CD8-positive, alpha-beta T cell (primary cell): ENCODE measurements at regions of chr6 and their contacts with region 1.

Region 1: GRCh38 chr6:84220809-84221409 is 6.5 kb downstream of the CEP162 start:
- DNase-seq: peak in 2 of 9 experiments; percentile 27 to 33
- ATAC-seq: no peak
- H3K4me3 ChIP-seq: no peak overlapping the region
- H3K4me3 Mint-ChIP-seq: no peak overlapping the region
- H3K27ac ChIP-seq: no peak overlapping the region
- H3K27ac Mint-ChIP-seq: no peak overlapping the region
- H3K4me1 ChIP-seq: no peaks in the 10 kb centered on the region
- H3K4me1 Mint-ChIP-seq: peaks cover 4% of the 10 kb centered on the region
- H3K27me3 ChIP-seq: no peaks in the 10 kb centered on the region
- H3K27me3 Mint-ChIP-seq: no peaks in the 10 kb centered on the region
- CTCF ChIP-seq: peak; percentile 60

Region 2: DNA sequence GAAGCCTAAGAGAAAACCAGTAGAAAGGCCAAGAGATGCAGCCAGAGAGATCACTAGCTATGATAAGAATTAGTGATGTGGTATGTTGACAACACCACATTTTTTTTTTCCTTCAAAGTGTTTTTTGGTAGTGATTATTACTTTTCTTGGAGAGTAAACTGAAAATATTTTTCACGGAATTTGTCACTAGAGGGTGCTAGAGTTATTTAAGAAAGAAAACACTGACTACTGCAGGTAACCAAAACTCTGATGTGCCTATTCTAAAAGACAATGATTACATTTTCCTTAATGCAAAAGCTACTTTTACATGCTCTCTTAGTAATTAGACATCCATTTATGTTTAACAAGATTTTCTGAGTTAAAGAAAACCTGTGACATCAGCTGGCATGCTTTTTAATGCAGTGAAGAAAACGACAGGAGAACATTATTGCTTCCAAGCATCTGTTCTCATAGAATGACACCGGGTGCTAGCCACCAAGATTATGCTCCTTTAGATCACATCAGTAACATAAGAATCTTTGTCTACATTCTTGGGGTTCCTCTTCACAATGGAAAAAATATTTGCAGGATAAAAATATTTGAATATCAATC is 998.9 kb before region 1 on chr6:
- CTCF ChIA-PET with region 1: no interaction called
- POLR2A ChIA-PET with region 1: no interaction called
- intact Hi-C with region 1: loop called (anchors 2 to 10 kb)
- DNase-seq: peak in 2 of 9 experiments; percentile 43 to 47
- ATAC-seq: no peak
- H3K4me3 ChIP-seq: no peak overlapping the region
- H3K4me3 Mint-ChIP-seq: no peak overlapping the region
- H3K27ac ChIP-seq: no peak overlapping the region
- H3K27ac Mint-ChIP-seq: no peak overlapping the region
- H3K4me1 ChIP-seq: no peaks in the 10 kb centered on the region
- H3K4me1 Mint-ChIP-seq: no peaks in the 10 kb centered on the region
- H3K27me3 ChIP-seq: no peaks in the 10 kb centered on the region
- H3K27me3 Mint-ChIP-seq: no peaks in the 10 kb centered on the region
- CTCF ChIP-seq: peak; percentile 62

Region 3: GRCh38 chr6:83615025-83615999 is 605.6 kb before region 1 on chr6:
- CTCF ChIA-PET with region 1: interaction called, 3 read pairs
- POLR2A ChIA-PET with region 1: no interaction called
- intact Hi-C with region 1: loop called in 1 of 2 experiments (anchors 5 kb)
- DNase-seq: peak in 2 of 9 experiments; percentile 8 to 24
- ATAC-seq: no peak
- H3K4me3 ChIP-seq: no peak overlapping the region
- H3K4me3 Mint-ChIP-seq: no peak overlapping the region
- H3K27ac ChIP-seq: no peak overlapping the region
- H3K27ac Mint-ChIP-seq: no peak overlapping the region
- H3K4me1 ChIP-seq: no peaks in the 10 kb centered on the region
- H3K4me1 Mint-ChIP-seq: no peaks in the 10 kb centered on the region
- H3K27me3 ChIP-seq: no peaks in the 10 kb centered on the region
- H3K27me3 Mint-ChIP-seq: no peaks in the 10 kb centered on the region
- CTCF ChIP-seq: peak; percentile 43

Region 4: DNA sequence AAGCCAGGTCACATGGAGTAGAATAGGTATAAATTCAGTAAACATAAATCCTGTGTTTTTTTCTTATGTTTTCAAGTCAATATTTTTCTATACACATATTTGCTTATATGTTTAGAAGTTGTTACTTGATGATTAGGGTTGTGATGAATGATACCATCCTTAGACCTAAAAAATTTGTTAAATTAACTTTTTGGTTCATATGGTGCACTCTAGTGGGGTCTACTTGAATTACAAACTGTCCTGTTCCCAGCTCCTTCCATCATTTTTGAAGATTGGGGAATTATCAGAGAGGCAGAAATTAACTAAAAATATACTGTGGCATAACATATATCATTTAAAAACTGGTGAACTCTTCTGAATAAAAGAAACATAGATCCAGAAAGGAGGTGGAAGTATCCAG is 416.0 kb before region 1 on chr6:
- CTCF ChIA-PET with region 1: no interaction called
- POLR2A ChIA-PET with region 1: no interaction called
- intact Hi-C with region 1: no loop called
- DNase-seq: no peak
- ATAC-seq: no peak
- H3K4me3 ChIP-seq: no peak overlapping the region
- H3K4me3 Mint-ChIP-seq: no peak overlapping the region
- H3K27ac ChIP-seq: no peak overlapping the region
- H3K27ac Mint-ChIP-seq: no peak overlapping the region
- H3K4me1 ChIP-seq: no peaks in the 10 kb centered on the region
- H3K4me1 Mint-ChIP-seq: no peaks in the 10 kb centered on the region
- H3K27me3 ChIP-seq: no peaks in the 10 kb centered on the region
- H3K27me3 Mint-ChIP-seq: peaks cover 4% of the 10 kb centered on the region
- CTCF ChIP-seq: no peak

Region 5: DNA sequence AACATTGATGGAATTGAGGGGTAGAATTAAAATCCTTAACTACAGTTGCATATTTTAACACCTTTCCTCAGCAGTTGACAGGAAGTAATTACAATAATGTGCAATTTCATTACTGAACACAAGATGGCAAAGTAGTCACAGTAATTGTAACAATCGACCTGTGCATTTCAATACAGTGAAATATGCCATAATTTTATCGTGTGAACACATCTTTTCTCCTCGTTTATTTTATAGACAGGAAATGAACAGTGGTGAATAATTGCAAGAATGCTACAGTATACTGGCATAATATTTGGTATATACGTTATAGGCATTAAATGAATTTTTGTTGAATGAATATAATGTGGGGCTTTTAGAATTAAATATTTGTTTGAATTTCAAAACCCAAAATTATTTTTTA is 336.4 kb before region 1 on chr6:
- CTCF ChIA-PET with region 1: interaction called, 4 read pairs
- POLR2A ChIA-PET with region 1: no interaction called
- intact Hi-C with region 1: loop called (anchors 1 to 2 kb)
- DNase-seq: peak in 2 of 9 experiments; percentile 50 to 66
- ATAC-seq: peak; percentile 79
- H3K4me3 ChIP-seq: no peak overlapping the region
- H3K4me3 Mint-ChIP-seq: no peak overlapping the region
- H3K27ac ChIP-seq: no peak overlapping the region
- H3K27ac Mint-ChIP-seq: no peak overlapping the region
- H3K4me1 ChIP-seq: no peaks in the 10 kb centered on the region
- H3K4me1 Mint-ChIP-seq: peaks cover 25% of the 10 kb centered on the region
- H3K27me3 ChIP-seq: no peaks in the 10 kb centered on the region
- H3K27me3 Mint-ChIP-seq: no peaks in the 10 kb centered on the region
- CTCF ChIP-seq: peak; percentile 79

Region 6: GRCh38 chr6:84177241-84177640 is 43.7 kb before region 1 on chr6:
- CTCF ChIA-PET with region 1: no interaction called
- POLR2A ChIA-PET with region 1: no interaction called
- intact Hi-C with region 1: no loop called
- DNase-seq: no peak
- ATAC-seq: no peak
- H3K4me3 ChIP-seq: no peak overlapping the region
- H3K4me3 Mint-ChIP-seq: no peak overlapping the region
- H3K27ac ChIP-seq: no peak overlapping the region
- H3K27ac Mint-ChIP-seq: no peak overlapping the region
- H3K4me1 ChIP-seq: no peaks in the 10 kb centered on the region
- H3K4me1 Mint-ChIP-seq: no peaks in the 10 kb centered on the region
- H3K27me3 ChIP-seq: no peaks in the 10 kb centered on the region
- H3K27me3 Mint-ChIP-seq: no peaks in the 10 kb centered on the region
- CTCF ChIP-seq: no peak